ENCODE measurements at regions of chrX and their contacts with region 1.

Region 1: GRCh38 chrX:53383376-53384076 is 38.9 kb downstream of the SMC1A start:
- DNase-seq: no peak
- H3K4me3 ChIP-seq: no peak overlapping the region
- H3K4me3 Mint-ChIP-seq: peak overlapping the region; percentile 24
- H3K27ac Mint-ChIP-seq: peak overlapping the region; percentile 53
- H3K4me1 ChIP-seq: no peaks in the 10 kb centered on the region
- H3K4me1 Mint-ChIP-seq: peaks cover 6% of the 10 kb centered on the region
- H3K27me3 ChIP-seq: no peaks in the 10 kb centered on the region
- H3K27me3 Mint-ChIP-seq: no peaks in the 10 kb centered on the region
- CTCF ChIP-seq: no peak

Region 2: DNA sequence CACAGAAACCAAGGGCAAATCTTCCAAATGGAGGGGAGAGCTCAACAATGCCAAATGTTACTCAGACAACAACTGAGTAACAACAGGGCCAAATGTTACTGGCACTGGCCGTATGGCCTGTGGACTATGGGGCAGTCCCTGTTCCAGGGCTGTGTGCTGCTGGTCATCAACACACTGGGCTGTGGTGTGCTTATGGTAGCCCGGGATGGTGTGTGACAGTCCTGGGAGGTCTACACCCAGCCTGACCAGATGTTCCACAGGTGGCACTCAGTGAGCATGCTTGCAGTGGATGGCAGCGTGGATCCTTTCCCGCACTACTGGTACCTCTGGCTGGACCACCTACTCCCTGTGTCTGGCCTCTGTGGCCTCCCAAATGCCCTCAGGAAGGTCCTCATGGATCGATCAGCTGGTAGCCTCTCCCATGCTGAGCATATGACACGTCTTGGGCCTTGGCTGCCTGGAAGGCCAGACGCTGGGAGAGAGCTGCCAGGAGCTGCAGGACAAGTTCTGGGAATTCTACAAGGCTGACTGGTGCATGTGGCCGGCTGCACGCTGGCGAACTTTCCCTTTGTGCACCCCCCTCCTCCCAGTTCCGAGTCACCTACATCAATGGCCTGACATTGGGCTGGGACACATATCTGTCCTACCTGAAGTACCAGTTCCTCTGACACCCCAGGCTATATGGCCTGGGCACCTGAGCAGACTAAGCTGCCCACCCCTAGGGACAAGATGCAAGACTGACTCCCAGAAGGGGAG is 42.5 kb before region 1 on chrX:
- CTCF ChIA-PET with region 1: no interaction called
- POLR2A ChIA-PET with region 1: no interaction called
- intact Hi-C with region 1: no loop called
- DNase-seq: no peak
- H3K4me3 ChIP-seq: no peak overlapping the region
- H3K4me3 Mint-ChIP-seq: no peak overlapping the region
- H3K27ac Mint-ChIP-seq: no peak overlapping the region
- H3K4me1 ChIP-seq: no peaks in the 10 kb centered on the region
- H3K4me1 Mint-ChIP-seq: no peaks in the 10 kb centered on the region
- H3K27me3 ChIP-seq: no peaks in the 10 kb centered on the region
- H3K27me3 Mint-ChIP-seq: no peaks in the 10 kb centered on the region
- CTCF ChIP-seq: no peak

Region 3: DNA sequence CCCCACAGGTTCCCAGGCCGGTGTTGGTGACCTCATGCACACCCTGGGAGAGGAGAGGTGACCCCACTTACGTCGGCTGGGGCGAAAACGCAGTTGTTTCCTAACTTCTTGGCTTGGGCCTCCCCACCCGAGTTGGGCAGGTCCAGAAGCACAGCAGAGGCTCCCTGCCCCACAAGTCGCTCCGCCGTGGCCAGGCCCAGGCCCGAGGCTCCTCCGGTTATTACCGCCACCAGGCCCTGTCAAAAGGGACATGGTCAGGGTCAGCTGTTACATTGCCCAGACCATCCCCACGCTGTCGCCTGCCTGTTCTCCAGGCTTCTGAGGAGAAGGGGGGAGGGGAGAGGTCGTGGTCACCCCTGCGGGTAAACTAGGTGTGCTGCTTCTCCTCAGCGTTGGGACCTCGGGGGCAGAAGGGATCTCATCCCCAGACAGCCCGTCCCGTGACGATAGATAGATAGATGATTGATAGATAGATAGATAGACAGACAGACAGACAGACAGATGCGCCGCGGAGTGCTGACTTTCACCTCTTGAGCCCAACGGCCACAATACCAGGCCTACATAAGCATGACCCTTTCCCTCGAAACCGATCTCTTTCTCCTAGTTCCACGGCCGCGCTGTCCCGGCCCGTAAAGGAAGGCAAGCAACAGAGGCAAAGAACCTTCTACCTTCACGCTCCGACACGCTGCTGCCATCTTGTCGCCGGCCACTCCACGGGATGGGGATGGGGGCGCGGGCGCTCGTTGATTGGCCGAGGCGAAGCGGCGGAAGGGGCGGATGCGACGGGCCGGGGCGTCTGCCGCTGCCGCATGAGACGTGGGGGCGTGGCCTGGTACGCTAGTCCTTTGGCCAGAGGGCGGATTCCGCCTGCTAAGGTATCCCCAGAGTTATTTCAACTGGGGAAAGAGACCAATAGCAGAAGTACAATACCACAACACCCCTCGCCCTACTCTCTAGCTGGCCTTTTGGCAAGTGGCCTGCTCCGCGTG is 50.4 kb after region 1 on chrX and contains the start of gene HSD17B10:
- CTCF ChIA-PET with region 1: interaction called, 4 read pairs
- POLR2A ChIA-PET with region 1: no interaction called
- intact Hi-C with region 1: loop called (anchors 1 kb)
- DNase-seq: peak; percentile 89
- H3K4me3 ChIP-seq: peak within 1 kb of the TSS; percentile 87
- H3K4me3 Mint-ChIP-seq: peak within 1 kb of the TSS; percentile 97
- H3K27ac Mint-ChIP-seq: peak within 1 kb of the TSS; percentile 79
- H3K4me1 ChIP-seq: peaks cover 7% of the 10 kb centered on the region; the same call in 1 of the 2 replicates
- H3K4me1 Mint-ChIP-seq: peaks cover 7% of the 10 kb centered on the region
- H3K27me3 ChIP-seq: no peaks in the 10 kb centered on the region
- H3K27me3 Mint-ChIP-seq: no peaks in the 10 kb centered on the region
- CTCF ChIP-seq: no peak
- total RNA-seq, gene HSD17B10: 129 and 137 TPM in 2 replicates